CD14-positive monocyte (primary cell): ENCODE measurements at regions of chr16 and their contacts with region 1.

Region 1: DNA sequence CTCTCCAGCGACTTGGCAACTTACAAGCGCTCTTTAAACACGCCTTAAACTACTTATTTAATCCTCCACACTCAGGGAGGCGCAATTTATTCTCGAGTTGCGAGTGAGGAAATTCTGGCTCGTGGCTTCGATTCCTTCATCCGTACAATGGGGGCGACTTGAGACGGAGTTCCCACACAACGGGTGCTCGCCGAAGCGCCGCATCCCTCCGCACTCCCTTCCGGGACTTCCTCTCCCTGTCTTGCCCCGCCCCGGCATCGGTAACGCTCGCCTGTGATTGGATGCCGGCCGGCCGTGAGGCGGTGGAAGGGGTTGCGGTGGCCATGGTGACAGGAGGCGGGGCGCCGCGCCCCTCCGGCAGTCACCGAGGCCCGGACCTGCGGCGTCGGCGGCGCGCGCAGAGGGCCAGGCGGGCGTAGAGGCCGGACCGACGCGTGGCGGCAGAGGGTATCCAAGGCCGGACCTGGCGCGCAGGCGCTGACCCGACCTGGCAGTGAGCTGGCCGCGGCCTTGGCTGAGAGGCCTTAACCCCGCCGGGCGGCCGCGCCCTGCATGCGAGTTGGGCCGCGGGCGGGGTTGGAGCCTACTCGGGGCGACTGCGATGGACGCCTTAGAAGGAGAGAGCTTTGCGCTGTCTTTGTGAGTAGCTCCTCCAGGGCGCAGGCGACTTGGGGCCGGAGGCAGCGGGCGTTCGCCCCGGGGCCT is at the start of gene ARL2BP:
- DNase-seq: peak; percentile 96 to 98 (median 96)
- H3K4me3 ChIP-seq: peak within 1 kb of the TSS; percentile 54 to 84 (median 79)
- H3K4me3 Mint-ChIP-seq: peak within 1 kb of the TSS; percentile 86 to 92
- H3K27ac ChIP-seq: peak within 1 kb of the TSS; percentile 75 to 98
- H3K27ac Mint-ChIP-seq: peak within 1 kb of the TSS; percentile 96 to 99 (median 98)
- H3K4me1 ChIP-seq: peaks cover 27 to 36% of the 10 kb centered on the region in 2 donors
- H3K4me1 Mint-ChIP-seq: peaks cover 29% of the 10 kb centered on the region
- H3K27me3 ChIP-seq: no peaks in the 10 kb centered on the region
- H3K27me3 Mint-ChIP-seq: no peaks in the 10 kb centered on the region
- CTCF ChIP-seq: no peak
- polyA plus RNA-seq, gene ARL2BP: 35.4 to 84.6 (median 84.0) TPM

Region 2: GRCh38 chr16:56888806-56889205 is 356.1 kb before region 1 on chr16:
- intact Hi-C with region 1: no loop called
- DNase-seq: peak; percentile 67 to 85 (median 79)
- H3K4me3 ChIP-seq: no peak overlapping the region
- H3K4me3 Mint-ChIP-seq: no peak overlapping the region
- H3K27ac ChIP-seq: no peak overlapping the region
- H3K27ac Mint-ChIP-seq: peak overlapping the region in 1 of 7 donors; percentile 30
- H3K4me1 ChIP-seq: peaks cover 7 to 10% of the 10 kb centered on the region in 2 donors
- H3K4me1 Mint-ChIP-seq: peaks cover 9% of the 10 kb centered on the region
- H3K27me3 ChIP-seq: no peaks in the 10 kb centered on the region
- H3K27me3 Mint-ChIP-seq: peaks cover 9 to 18% (median 13%) of the 10 kb centered on the region in 3 donors
- CTCF ChIP-seq: no peak

Region 3: GRCh38 chr16:57284208-57284951 is 39.5 kb after region 1 on chr16 and contains the start of gene PLLP:
- intact Hi-C with region 1: loop called in 1 of 2 experiments (anchors 5 kb)
- DNase-seq: peak in 2 of 3 donors; percentile 23 to 60
- H3K4me3 ChIP-seq: peak within 1 kb of the TSS; percentile 35 to 73 (median 36)
- H3K4me3 Mint-ChIP-seq: peak within 1 kb of the TSS; percentile 73 to 87
- H3K27ac ChIP-seq: no peak within 1 kb of the TSS
- H3K27ac Mint-ChIP-seq: peak within 1 kb of the TSS in 4 of 7 donors; percentile 25 to 62 (median 52)
- H3K4me1 ChIP-seq: peaks cover 11 to 18% of the 10 kb centered on the region in 2 donors
- H3K4me1 Mint-ChIP-seq: peaks cover 19% of the 10 kb centered on the region
- H3K27me3 ChIP-seq: peaks cover 18 to 51% of the 10 kb centered on the region in 2 donors
- H3K27me3 Mint-ChIP-seq: peaks cover 48 to 67% (median 57%) of the 10 kb centered on the region in 3 donors
- CTCF ChIP-seq: no peak
- polyA plus RNA-seq, gene PLLP: 0.52 to 1.2 (median 0.97) TPM